Activated T-helper 2 cell treated with anti-CD3 and anti-CD28 coated beads, Interferon-gamma antibody, Interleukin-2, Interleukin-4, amounts not matched to agents 10 μg/mL and 5 μg/mL and 100 μg/mL, durations not matched to agents 14 hours and 24 hours and 36 hours (primary cell): ENCODE measurements at regions of chr3 and their contacts with region 1.

Region 1: DNA sequence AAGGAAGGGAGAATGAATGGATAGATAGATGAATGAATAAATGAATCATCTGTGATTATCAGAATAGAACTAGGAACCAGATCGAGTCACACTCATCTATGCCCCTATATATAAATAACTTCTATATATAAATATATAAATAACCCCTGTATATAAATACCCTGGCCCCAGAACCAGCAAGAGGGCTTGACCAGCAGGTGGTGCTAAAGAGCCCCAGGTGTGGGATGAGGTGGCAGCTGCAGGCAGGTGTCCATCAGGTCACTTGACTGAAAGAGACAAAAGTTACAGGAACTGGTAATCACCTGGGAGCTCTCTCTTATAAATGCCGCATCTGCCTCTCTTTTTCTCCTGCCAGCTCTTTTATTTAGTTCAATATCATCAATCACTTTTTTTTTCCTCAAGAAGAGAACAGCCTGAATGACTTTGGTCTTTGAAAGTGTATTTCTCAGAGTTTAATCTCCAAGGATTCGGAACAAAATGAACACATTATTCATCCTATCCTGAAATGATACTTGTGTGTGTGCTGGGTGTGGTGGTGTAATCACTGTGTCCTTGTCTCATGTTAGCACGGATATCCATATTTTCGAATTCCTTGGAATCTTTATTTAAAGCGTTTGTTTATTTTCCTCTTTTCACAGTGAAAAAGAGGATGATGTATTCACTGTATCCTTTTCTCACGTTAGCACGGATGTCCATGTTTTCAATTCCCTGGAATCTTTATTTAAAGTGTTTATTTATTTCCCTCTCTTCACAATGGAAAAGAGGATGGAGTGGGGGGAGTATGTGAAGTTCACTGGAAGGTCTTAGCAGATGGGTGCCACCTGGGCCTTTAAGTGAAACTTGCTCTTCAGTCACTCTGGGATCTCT is 35.4 kb upstream of the ATG7 start:
- DNase-seq: peak; percentile 55
- H3K4me3 Mint-ChIP-seq: no peak overlapping the region
- H3K27ac Mint-ChIP-seq: no peak overlapping the region
- H3K4me1 Mint-ChIP-seq: peaks cover 24% of the 10 kb centered on the region
- H3K27me3 Mint-ChIP-seq: peaks cover 26% of the 10 kb centered on the region

Region 2: DNA sequence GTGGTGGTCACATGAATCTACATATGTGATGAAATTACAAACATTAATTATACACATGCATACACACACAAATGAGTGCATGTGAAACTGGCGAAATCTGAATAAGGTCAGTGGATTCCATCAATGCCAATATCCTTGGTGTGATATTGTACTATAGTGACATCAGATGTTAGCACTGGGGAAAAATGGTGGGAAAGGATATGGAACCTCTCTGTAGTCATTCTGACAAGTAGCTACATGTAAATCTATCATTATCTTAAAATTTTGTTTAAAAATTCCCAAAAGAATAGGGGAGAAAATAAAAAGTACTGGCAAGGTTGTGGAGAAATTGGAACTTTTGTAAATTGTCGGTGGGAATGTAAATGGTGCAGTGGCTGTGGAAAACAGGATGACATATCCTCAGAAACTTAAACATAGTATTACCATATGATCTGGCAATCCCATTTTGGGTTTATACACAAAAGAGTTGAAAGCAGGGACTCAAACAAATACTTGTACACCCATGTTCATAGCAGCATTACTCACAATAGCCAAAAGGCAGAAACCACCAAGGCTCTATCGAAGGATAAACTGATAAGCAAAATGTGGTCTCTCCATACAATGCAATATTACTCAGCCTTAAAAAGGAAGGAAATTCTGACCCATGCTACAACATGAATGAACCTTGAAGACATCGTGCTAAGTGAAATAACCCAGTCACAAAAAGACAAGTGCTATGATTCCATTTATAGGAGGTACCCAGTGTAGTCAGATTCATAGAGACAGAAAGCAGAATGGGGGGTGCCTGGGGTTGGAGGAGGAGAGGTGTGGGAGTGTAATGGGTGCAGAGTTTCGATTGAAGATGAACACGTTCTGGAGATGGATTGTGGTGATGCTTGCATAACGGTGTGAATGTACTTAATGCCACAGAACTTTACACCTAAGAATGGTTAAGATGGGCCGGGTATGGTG is 107.9 kb before region 1 on chr3:
- intact Hi-C with region 1: loop called (anchors 2 kb)
- DNase-seq: no peak
- H3K4me3 Mint-ChIP-seq: no peak overlapping the region
- H3K27ac Mint-ChIP-seq: peak overlapping the region; percentile 8
- H3K4me1 Mint-ChIP-seq: peaks cover 7% of the 10 kb centered on the region
- H3K27me3 Mint-ChIP-seq: peaks cover 8% of the 10 kb centered on the region

Region 3: DNA sequence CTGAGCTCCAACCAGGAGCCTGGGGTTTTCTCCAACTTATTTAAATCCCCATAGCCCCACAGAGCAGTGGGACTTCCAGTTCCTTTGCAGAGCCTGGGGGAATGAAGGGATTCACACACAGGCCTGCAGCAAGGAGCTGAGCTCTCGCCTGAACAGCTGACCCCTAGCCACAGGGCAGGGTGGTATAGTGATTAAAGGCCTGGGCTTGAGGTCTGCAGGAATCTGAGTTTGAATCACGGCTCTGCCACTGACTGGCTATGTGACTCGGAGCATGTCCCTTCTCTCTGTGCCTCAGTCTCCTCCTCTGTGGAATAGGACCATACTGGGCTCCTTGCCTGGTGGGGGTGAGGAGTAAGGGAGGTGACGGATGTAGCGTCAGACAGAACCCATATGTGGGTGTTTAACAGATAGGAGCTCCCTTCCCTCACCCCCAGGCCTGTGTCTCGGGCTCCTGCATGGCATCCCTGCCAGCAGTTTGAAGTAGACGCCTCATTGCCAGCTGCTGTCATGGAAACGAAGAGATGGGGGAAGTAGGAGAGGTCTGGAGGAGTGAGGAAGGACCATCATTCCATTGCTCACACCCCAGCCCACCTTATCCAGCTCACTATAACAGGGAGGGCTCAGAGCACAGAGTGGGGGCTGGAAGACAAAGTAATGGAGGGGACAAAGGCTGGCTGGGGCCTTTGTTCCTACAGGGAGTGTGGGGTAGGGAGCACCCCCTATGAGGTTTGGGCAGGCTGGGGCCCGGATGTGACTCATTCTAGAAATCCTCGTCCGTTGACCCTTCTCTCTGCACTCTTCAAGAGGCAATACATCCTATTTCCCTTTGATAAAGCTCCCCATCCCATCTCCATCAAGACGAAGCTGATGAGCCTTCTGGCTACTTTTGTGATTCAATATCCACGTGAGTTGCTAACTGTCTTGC is 67.7 kb before region 1 on chr3:
- intact Hi-C with region 1: no loop called
- DNase-seq: no peak
- H3K4me3 Mint-ChIP-seq: no peak overlapping the region
- H3K27ac Mint-ChIP-seq: no peak overlapping the region
- H3K4me1 Mint-ChIP-seq: no peaks in the 10 kb centered on the region
- H3K27me3 Mint-ChIP-seq: peaks cover 21% of the 10 kb centered on the region

Region 4: DNA sequence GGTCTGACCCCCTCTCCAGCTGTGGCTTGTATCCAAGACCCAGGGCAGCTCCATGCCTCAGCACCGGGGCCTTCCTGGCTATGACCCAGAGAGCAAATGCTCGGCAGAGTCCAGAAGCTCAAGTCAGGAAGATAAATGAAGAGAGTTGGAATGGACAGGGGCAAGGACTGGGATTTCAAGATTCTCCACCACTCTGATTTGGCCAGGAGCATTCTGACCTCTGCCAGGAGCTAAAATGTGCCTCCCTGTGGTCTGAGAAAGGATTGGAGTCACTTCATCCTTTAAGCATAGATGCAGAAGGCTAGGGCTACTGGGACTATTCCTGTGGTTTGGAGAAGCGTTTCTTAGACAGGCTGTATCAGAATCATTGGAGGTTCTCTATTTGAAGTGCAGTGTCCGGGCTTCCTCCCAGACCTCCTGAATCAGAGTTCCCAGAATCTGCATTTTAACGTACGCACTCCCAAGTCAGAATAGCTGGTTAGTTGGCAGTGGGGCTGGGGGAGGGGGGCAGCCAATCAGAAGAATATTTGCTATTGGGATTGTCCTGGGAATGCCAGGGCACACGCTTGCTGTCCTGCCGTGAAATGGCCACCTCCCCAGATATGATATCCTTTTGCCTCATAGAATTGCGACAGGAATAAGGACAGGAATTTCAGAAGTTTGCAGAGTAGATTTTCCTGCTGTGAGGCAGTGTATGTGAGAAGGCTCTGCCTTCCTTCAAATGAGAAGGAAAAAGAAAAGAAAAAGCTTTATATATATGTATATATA is 25.1 kb before region 1 on chr3:
- intact Hi-C with region 1: no loop called
- DNase-seq: no peak
- H3K4me3 Mint-ChIP-seq: no peak overlapping the region
- H3K27ac Mint-ChIP-seq: no peak overlapping the region
- H3K4me1 Mint-ChIP-seq: peaks cover 4% of the 10 kb centered on the region
- H3K27me3 Mint-ChIP-seq: peaks cover 20% of the 10 kb centered on the region

Region 5: GRCh38 chr3:11271986-11272904 is 35.4 kb after region 1 on chr3 and contains the start of gene ATG7:
- intact Hi-C with region 1: loop called (anchors 2 kb)
- DNase-seq: peak; percentile 95
- H3K4me3 Mint-ChIP-seq: peak within 1 kb of the TSS; percentile 90
- H3K27ac Mint-ChIP-seq: peak within 1 kb of the TSS; percentile 93
- H3K4me1 Mint-ChIP-seq: peaks cover 43% of the 10 kb centered on the region
- H3K27me3 Mint-ChIP-seq: peaks cover 2% of the 10 kb centered on the region
- total RNA-seq, gene ATG7: 44.1 and 45.2 TPM in 2 replicates

Region 6: GRCh38 chr3:11306817-11307589 is 70.2 kb after region 1 on chr3:
- intact Hi-C with region 1: loop called (anchors 2 kb)
- DNase-seq: peak; percentile 27
- H3K4me3 Mint-ChIP-seq: no peak overlapping the region
- H3K27ac Mint-ChIP-seq: peak overlapping the region; percentile 53
- H3K4me1 Mint-ChIP-seq: peaks cover 29% of the 10 kb centered on the region
- H3K27me3 Mint-ChIP-seq: no peaks in the 10 kb centered on the region

Region 7: GRCh38 chr3:11626084-11626463 is 389.2 kb after region 1 on chr3:
- intact Hi-C with region 1: loop called (anchors 1 kb)
- DNase-seq: peak; percentile 22
- H3K4me3 Mint-ChIP-seq: peak overlapping the region; percentile 37
- H3K27ac Mint-ChIP-seq: peak overlapping the region; percentile 87
- H3K4me1 Mint-ChIP-seq: peaks cover 73% of the 10 kb centered on the region
- H3K27me3 Mint-ChIP-seq: no peaks in the 10 kb centered on the region